ENCODE measurements at regions of chr4 and their contacts with region 1.

Region 1: DNA sequence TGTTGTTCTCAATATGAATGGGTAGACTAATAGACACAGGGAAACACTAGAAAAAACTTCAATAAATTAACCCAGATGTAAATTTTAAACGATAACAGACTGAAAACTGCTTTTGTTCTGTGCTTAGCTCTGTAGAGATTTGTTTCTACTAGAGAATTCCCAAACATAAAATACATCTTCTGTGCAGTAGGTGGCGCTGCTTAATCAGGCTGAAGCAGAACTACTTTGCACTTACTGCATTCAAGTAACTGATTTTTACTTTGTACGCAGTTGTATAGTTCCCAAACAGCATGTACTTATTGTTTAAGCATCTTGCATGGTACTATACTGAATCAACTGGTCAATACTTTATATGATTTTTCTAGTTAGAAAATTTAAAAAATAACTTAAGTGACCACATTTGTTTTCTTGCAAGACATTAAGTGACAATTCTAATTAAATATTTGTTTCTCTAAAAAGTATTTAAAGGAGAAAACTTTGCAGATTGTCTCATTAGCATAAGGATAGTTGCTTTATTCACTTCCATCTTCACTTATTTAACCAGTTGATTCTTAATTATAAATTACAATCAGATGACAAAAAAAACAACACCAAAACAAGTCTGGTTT is 490.6 kb downstream of the IL15 start:
- DNase-seq: peak; percentile 38 to 46
- H3K4me3 ChIP-seq: no peak overlapping the region
- H3K27ac ChIP-seq: no peak overlapping the region
- H3K4me1 ChIP-seq: no peaks in the 10 kb centered on the region
- H3K27me3 ChIP-seq: no peaks in the 10 kb centered on the region
- CTCF ChIP-seq: peak; percentile 89

Region 2: DNA sequence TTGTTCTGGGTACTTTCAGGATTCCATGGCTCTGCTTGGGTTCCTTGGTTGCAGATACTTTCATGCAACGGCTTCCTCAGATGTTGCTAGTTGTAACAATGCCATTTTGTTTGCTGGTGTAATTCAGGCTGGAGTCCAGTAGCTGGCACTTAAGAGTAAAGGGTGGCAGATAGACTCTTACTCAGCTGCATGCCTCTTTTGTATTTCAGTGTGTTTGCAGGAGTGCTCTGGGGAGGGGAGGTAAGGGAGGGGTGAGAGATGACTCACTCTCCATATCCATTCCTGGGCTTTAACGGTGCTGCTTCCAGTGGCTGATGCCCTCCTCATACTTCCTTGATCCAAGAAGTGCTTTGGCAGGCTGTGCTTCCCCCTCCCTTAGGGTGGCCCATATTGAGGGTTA is 751.1 kb before region 1 on chr4:
- CTCF ChIA-PET with region 1: no interaction called
- POLR2A ChIA-PET with region 1: no interaction called
- intact Hi-C with region 1: loop called (anchors 1 kb)
- DNase-seq: peak; percentile 64 to 68
- H3K4me3 ChIP-seq: no peak overlapping the region
- H3K27ac ChIP-seq: no peak overlapping the region
- H3K4me1 ChIP-seq: no peaks in the 10 kb centered on the region
- H3K27me3 ChIP-seq: no peaks in the 10 kb centered on the region
- CTCF ChIP-seq: peak; percentile 55

Region 3: DNA sequence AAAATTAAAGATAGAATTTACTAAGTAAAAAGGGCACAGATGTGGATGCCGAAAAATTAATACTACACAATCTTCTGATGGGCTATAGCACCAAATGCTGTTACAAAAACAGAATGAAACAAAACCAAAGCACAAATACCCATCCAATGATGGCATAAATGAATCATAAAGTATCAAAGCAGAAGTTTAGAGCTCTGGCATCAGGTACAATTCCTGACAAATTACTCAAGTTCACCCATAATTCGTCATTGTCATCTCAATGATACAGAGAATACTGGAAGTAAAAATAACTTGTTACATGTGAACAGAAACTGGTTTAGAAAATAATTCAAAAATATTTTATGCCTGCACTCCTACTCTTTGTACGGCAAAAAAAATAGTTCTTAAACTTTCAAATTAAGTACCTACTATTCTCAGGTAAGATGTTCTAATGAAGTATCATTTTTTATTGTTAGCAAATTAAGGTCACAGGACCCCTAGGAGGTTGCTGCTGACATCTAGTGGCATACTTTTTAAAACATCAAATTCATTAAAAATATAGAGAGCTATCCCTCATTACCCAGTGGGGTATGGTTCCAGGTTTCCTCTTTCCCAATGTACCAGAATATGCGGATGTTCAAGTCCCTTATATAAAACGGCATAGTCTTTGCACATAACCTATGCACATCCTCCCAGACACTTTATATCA is 593.0 kb after region 1 on chr4:
- CTCF ChIA-PET with region 1: interaction called, 4 read pairs
- POLR2A ChIA-PET with region 1: no interaction called
- intact Hi-C with region 1: loop called (anchors 1 kb)
- DNase-seq: peak in 1 of 2 experiments; percentile 65
- H3K4me3 ChIP-seq: no peak overlapping the region
- H3K27ac ChIP-seq: peak overlapping the region; percentile 64
- H3K4me1 ChIP-seq: peaks cover 16% of the 10 kb centered on the region
- H3K27me3 ChIP-seq: no peaks in the 10 kb centered on the region
- CTCF ChIP-seq: peak; percentile 63

Region 4: DNA sequence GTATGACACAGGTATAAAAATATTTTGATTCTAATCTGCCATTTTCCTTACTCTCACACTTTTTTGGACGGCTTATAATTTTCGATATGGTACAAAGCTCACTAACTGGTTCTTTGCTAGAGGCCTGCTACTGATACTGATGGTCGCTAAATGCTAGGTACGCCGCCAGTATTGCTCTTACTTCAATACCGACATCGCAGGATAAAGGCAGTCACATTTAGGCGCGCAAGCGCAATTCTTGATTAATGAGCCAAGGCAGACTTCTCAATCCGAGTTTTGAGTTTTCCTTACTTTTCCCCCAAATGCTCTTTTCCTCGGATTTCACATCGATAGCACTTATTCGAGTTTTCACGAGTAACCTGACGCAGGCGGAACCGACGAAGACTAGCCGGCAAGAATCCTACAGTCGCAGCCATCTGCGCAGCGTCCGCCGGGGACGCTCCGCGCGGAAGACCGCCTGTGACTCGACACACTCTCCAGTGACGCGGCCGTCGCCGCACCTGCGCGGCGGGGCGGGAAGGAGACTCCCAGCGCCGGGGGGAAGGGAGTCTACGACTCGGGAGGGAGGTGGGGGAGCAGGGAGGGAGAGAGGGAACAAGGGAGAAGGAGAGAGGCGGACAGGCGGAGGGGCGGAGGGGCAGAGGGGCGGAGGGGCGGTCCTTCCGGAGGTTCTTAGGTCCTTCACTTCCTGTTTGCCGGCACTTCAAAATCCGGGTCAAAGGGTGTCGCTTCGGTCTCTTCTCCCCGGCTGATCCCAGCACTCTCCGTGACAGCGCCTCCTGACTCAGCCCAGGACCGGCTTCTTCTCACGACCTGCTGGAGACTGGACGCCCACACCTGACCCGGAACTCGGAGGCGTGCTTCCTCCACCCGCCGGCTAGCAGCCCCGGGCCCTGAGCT is 1057.5 kb after region 1 on chr4 and contains the start of gene USP38:
- CTCF ChIA-PET with region 1: no interaction called
- POLR2A ChIA-PET with region 1: no interaction called
- intact Hi-C with region 1: loop called (anchors 10 kb)
- DNase-seq: peak; percentile 88 to 89
- H3K4me3 ChIP-seq: peak within 1 kb of the TSS; percentile 92
- H3K27ac ChIP-seq: peak within 1 kb of the TSS; percentile 89
- H3K4me1 ChIP-seq: peaks cover 32% of the 10 kb centered on the region
- H3K27me3 ChIP-seq: no peaks in the 10 kb centered on the region
- CTCF ChIP-seq: no peak
- total RNA-seq, gene USP38: 11.9 and 12.3 TPM in 2 replicates